ENCODE measurements at regions of chr1 and their contacts with region 1.

Region 1: DNA sequence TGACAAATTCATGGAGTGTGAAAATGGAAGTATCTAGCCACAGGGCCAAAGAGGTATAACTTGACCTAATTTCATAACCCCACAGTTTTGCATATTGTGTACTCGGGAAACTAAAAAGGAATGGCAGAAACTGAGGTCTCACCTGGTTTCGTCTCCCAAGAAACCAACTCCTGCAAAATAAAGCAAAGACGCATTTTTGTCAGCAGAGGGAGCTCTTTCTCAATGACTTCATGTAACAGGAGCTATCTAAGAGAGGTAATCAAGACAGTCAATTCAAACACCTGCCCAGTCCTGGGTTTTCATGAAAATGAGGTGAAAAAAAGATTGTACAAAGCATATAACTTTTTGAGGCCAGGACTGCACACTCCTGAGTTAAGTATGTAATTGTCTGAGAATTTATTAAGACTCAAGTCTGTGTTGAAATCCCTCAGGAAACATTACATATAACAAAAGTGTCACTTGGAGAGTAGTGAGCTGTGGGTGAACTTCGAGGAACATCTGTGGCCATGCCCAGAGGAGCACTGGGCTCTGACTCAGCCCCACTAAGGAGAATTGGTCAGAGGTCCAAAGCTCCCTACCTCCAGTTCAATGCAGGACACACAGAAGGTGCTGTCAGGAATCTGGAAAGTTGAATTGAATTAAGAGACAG is 17.6 kb downstream of the FCRL4 start:
- DNase-seq: peak; percentile 48
- ATAC-seq: no peak
- H3K4me3 Mint-ChIP-seq: no peak overlapping the region
- H3K27ac Mint-ChIP-seq: no peak overlapping the region
- H3K4me1 Mint-ChIP-seq: no peaks in the 10 kb centered on the region
- H3K27me3 Mint-ChIP-seq: peaks cover 10% of the 10 kb centered on the region

Region 2: GRCh38 chr1:157566484-157567300 is 13.6 kb before region 1 on chr1:
- CTCF ChIA-PET with region 1: interaction called, 16 read pairs
- POLR2A ChIA-PET with region 1: no interaction called
- DNase-seq: no peak
- ATAC-seq: no peak
- H3K4me3 Mint-ChIP-seq: no peak overlapping the region
- H3K27ac Mint-ChIP-seq: no peak overlapping the region
- H3K4me1 Mint-ChIP-seq: peaks cover 9% of the 10 kb centered on the region
- H3K27me3 Mint-ChIP-seq: peaks cover 11% of the 10 kb centered on the region

Region 3: DNA sequence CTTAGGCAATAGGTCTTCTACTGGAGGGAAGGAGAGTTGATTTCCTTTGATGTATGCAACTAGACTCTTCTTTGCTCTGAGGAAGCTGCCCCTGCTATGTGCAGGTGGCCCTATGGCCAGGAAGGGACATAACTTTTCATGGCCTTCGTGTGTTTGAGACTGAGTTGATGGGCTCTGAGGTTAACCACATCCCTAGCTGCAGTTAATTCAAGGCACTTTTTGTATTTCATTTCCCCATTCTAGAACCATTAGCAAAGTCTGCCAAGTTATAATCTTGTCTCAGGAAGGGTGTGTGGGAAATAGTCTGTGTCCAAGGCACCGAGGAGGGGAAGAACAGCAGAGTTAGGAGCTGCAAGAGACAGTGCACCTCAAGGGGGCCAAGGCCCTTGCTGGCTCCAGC is 15.1 kb after region 1 on chr1:
- CTCF ChIA-PET with region 1: interaction called, 13 read pairs
- POLR2A ChIA-PET with region 1: interaction called, 3 read pairs
- DNase-seq: peak; percentile 22
- ATAC-seq: no peak
- H3K4me3 Mint-ChIP-seq: no peak overlapping the region
- H3K27ac Mint-ChIP-seq: no peak overlapping the region
- H3K4me1 Mint-ChIP-seq: peaks cover 18% of the 10 kb centered on the region
- H3K27me3 Mint-ChIP-seq: peaks cover 10% of the 10 kb centered on the region

Region 4: GRCh38 chr1:157691285-157691920 is 111.1 kb after region 1 on chr1:
- CTCF ChIA-PET with region 1: interaction called, 34 read pairs
- POLR2A ChIA-PET with region 1: no interaction called
- DNase-seq: no peak
- ATAC-seq: no peak
- H3K4me3 Mint-ChIP-seq: no peak overlapping the region
- H3K27ac Mint-ChIP-seq: no peak overlapping the region
- H3K4me1 Mint-ChIP-seq: no peaks in the 10 kb centered on the region
- H3K27me3 Mint-ChIP-seq: peaks cover 7% of the 10 kb centered on the region

Region 5: GRCh38 chr1:158124999-158125398 is 544.7 kb after region 1 on chr1:
- CTCF ChIA-PET with region 1: interaction called, 12 read pairs
- POLR2A ChIA-PET with region 1: no interaction called
- DNase-seq: peak; percentile 82
- ATAC-seq: peak; percentile 90
- H3K4me3 Mint-ChIP-seq: no peak overlapping the region
- H3K27ac Mint-ChIP-seq: no peak overlapping the region
- H3K4me1 Mint-ChIP-seq: peaks cover 11% of the 10 kb centered on the region
- H3K27me3 Mint-ChIP-seq: peaks cover 25% of the 10 kb centered on the region